Calu3 (cell line): ENCODE measurements at regions of chr1 and their contacts with region 1.

Region 1: GRCh38 chr1:27348861-27349783 is 7.3 kb downstream of the SYTL1 start:
- DNase-seq: peak; percentile 60
- H3K4me3 Mint-ChIP-seq: no peak overlapping the region
- H3K27ac Mint-ChIP-seq: no peak overlapping the region
- H3K4me1 Mint-ChIP-seq: peaks cover 16% of the 10 kb centered on the region
- H3K27me3 Mint-ChIP-seq: no peaks in the 10 kb centered on the region
- CTCF ChIP-seq: no peak

Region 2: GRCh38 chr1:27179979-27180378 is 169.1 kb before region 1 on chr1:
- CTCF ChIA-PET with region 1: interaction called, 13 read pairs
- intact Hi-C with region 1: no loop called
- DNase-seq: no peak
- H3K4me3 Mint-ChIP-seq: no peak overlapping the region
- H3K27ac Mint-ChIP-seq: no peak overlapping the region
- H3K4me1 Mint-ChIP-seq: no peaks in the 10 kb centered on the region
- H3K27me3 Mint-ChIP-seq: no peaks in the 10 kb centered on the region
- CTCF ChIP-seq: no peak